Aorta (tissue), 5 donors: ENCODE measurements at regions of chr15 and their contacts with region 1.

Region 1: GRCh38 chr15:46039703-46040102 is 404.9 kb downstream of the SQOR start:
- DNase-seq: no peak
- ATAC-seq: no peak
- H3K4me3 ChIP-seq: no peak overlapping the region
- H3K27ac ChIP-seq: no peak overlapping the region
- H3K4me1 ChIP-seq: no peaks in the 10 kb centered on the region
- H3K27me3 ChIP-seq: no peaks in the 10 kb centered on the region

Region 2: DNA sequence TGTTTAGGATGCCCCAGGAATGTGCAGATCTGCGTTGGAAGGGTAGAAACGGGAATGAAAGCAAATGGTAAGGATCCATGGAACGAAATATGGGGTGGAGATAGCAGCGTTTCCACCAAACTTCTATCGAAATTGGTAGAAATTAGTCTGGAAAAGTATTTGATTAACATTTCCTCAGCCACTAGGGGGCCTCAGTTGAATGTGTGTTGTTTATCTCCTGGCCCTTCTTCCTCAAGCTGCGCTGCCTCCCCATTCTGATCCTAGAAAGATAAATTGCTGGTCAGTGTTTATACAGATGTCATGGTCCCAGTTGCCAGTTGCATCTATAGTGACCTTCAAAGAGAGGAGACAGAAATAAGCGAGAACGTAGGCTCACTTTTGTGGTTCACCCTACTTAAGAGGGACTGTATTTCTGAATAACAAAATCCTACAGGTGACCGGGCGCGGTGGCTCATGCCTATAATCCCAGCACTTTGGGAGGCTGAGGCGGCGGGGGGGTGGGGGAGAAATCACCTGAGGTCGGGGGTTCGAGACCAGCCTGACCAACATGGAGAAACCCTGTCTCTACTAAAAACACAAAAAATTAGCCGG is 52.3 kb after region 1 on chr15:
- intact Hi-C with region 1: loop called in 1 of 2 experiments (anchors 2 kb)
- DNase-seq: no peak
- ATAC-seq: no peak
- H3K4me3 ChIP-seq: no peak overlapping the region
- H3K27ac ChIP-seq: no peak overlapping the region
- H3K4me1 ChIP-seq: no peaks in the 10 kb centered on the region
- H3K27me3 ChIP-seq: no peaks in the 10 kb centered on the region